ENCODE measurements at regions of chr9 and their contacts with region 1.

Region 1: GRCh38 chr9:87324613-87325194 is 173.0 kb upstream of the DAPK1 start:
- DNase-seq: no peak
- ATAC-seq: no peak
- H3K4me3 ChIP-seq: no peak overlapping the region
- H3K4me1 ChIP-seq: no peaks in the 10 kb centered on the region
- CTCF ChIP-seq: no peak

Region 2: GRCh38 chr9:86413966-86414880 is 910.5 kb before region 1 on chr9:
- intact Hi-C with region 1: loop called (anchors 10 kb)
- DNase-seq: no peak
- ATAC-seq: no peak
- H3K4me3 ChIP-seq: no peak overlapping the region
- H3K4me1 ChIP-seq: no peaks in the 10 kb centered on the region
- CTCF ChIP-seq: no peak

Region 3: GRCh38 chr9:86486891-86487837 is 837.5 kb before region 1 on chr9:
- intact Hi-C with region 1: loop called (anchors 5 kb)
- DNase-seq: no peak
- ATAC-seq: no peak
- H3K4me3 ChIP-seq: no peak overlapping the region
- H3K4me1 ChIP-seq: no peaks in the 10 kb centered on the region
- CTCF ChIP-seq: no peak

Region 4: DNA sequence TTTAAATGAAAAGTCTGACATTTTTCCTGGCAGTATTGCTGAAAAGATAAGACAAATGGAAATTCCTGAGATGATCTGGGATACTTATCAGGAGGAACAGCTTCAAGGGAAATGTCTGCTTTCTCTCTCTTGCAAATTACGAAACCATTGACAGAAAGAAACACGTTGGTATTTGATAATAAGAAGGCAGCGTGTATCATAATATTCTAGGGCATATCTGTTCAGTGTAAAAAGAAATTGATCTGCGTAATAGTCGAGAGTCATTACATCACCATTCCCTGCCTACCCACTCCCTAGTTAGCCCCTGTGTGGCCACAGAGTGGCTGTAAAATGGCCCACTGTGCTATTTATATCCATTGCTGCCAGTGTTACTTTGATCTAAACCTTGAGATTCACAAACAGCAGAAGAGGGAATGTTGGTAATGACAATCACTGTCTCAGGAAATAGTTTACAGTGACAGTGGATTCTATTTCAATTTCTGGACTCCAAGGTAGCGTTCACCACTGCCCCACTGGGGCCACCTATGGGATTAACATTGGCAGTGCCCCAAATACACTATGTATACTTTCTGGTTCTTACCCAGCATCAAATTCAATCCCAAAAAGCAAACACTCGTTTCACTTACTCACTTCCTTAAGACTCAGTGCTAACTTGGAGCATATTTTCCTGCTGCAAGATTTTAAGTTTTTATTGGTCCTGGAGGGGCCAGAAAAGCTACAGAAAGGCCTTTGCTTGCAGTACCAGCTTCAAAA is 244.0 kb before region 1 on chr9:
- intact Hi-C with region 1: no loop called
- DNase-seq: no peak
- ATAC-seq: no peak
- H3K4me3 ChIP-seq: no peak overlapping the region
- H3K4me1 ChIP-seq: no peaks in the 10 kb centered on the region
- CTCF ChIP-seq: no peak

Region 5: DNA sequence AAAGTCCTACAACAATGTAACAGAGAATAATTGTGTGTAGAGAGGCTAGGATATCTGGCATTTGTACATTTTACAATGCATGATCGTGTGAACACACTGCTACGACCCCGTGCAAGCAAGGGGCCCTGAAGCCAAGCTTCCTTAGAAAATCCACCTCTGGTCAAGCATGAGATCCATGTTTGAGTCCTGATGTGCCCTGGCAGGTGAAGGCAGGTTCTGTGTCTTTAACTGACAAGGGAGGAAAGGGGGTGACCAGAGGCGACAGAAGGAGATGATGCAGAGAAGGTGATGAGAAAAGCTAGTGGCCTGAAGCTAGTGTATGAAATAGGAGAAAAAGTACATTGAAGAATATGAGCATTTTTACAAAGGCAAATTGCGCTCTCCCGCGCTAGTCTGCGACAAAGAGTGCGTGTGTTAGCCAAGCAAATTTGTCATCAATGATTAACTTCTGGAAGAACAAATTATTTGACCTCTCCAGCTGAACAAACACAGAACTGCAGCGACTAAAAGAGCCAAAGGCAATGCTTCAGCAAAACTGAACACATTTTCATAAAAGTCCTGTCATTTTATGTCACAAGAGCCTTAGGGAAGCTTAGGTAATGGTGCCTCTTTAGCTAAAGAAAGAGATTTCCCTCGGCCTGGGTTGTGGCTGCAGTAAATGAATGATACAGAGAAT is 71.2 kb after region 1 on chr9:
- intact Hi-C with region 1: no loop called
- DNase-seq: no peak
- ATAC-seq: peak; percentile 76
- H3K4me3 ChIP-seq: no peak overlapping the region
- H3K4me1 ChIP-seq: peaks cover 4% of the 10 kb centered on the region
- CTCF ChIP-seq: no peak

Measured in mucosa of descending colon (tissue), 3 donors.